ENCODE measurements at regions of chr10 and their contacts with region 1.

Region 1: GRCh38 chr10:103592186-103593021 is 98.9 kb downstream of the NEURL1 start:
- DNase-seq: peak; percentile 34 to 79
- H3K4me3 ChIP-seq: no peak overlapping the region
- H3K4me1 ChIP-seq: no peaks in the 10 kb centered on the region
- H3K27me3 ChIP-seq: peaks cover under 1% of the 10 kb centered on the region; the same call in 1 of the 2 replicates

Region 2: DNA sequence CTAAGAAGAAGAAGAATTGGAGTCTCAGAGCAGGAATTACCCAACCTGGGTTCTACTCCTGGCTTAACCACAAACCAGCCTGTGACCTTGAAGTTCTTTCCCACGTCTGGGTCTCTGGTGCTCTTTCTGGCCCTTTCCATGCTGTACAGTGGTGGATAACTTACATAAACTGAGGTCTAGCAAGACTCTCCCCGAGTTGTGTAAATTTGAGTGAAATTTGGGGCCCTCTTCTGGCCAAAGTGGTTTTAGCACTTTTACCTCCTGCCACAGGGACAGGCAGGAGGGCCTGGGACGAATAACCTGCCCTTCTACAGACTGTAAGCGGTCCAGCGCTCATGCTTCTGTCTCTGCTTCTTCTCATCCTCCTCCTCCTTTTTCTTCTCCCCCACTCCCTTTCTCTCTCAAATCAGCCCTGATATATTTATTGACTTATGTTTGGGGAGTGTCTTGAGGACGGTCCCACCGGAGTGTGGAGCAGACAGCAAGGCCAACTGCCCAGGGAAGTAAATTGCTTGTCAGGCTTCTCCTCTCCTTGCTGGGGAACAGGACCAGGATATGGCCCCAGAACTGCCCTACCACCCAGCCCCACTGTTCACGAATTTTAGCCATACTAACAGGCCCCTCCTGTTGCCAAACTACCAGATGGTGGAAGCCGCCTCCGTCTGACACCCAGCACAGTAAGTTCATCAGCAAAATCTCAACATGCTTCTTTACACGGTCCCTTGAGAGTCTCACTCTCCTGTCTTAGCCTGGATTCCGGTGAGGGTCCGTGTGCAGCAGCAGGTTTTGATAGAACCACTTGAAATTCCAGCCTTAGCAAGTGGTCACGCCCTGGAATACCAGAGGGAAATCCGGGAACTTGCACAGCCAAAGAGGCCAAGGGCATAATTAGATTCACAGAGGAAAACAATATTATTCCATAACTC is 267.0 kb after region 1 on chr10:
- in situ Hi-C with region 1: loop called (anchors 10 kb)
- DNase-seq: peak; percentile 28 to 77
- H3K4me3 ChIP-seq: no peak overlapping the region
- H3K4me1 ChIP-seq: peaks cover 5% of the 10 kb centered on the region; the same call in 1 of the 2 replicates
- H3K27me3 ChIP-seq: peaks cover 2% of the 10 kb centered on the region; the same call in 1 of the 2 replicates

Measured in HAP-1 (cell line).